ENCODE measurements at regions of chr6 and their contacts with region 1.

Region 1: GRCh38 chr6:14066782-14067406 is 50.7 kb upstream of the CD83 start:
- DNase-seq: no peak
- H3K4me3 ChIP-seq: no peak overlapping the region
- H3K27ac ChIP-seq: no peak overlapping the region
- H3K4me1 ChIP-seq: no peaks in the 10 kb centered on the region
- H3K27me3 ChIP-seq: no peaks in the 10 kb centered on the region
- CTCF ChIP-seq: peak in 2 of 3 experiments; percentile 61 to 69; a peak in 2 of 4 replicates
- EP300 ChIP-seq: no peak
- POLR2A ChIP-seq: no peak
- RAD21 ChIP-seq: peak; percentile 92 to 93

Region 2: DNA sequence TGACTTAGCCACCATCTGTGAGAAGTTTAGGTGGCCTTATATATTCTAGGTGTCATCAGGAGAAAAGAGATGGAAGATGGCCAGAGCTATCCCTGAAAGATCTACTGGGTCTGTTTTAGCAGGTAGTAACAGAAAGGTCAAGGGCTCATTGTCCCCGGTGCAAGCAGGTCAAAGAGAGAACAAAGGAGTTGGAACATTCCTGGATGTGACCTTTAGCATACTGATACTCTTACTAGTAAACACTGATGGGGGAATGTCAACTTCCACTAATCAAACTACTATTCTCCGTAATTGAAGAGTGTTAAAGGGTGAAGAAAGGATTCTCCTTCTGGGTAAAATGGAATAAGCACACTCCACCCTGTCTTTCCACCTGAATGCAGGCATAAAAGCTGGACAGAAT is 248.6 kb before region 1 on chr6:
- CTCF ChIA-PET with region 1: no interaction called
- POLR2A ChIA-PET with region 1: no interaction called
- DNase-seq: no peak
- H3K4me3 ChIP-seq: no peak overlapping the region
- H3K27ac ChIP-seq: no peak overlapping the region
- H3K4me1 ChIP-seq: peaks cover 0 to 2% (median 0%) of the 10 kb centered on the region in 4 experiments; a peak in 1 of 7 replicates
- H3K27me3 ChIP-seq: no peaks in the 10 kb centered on the region
- CTCF ChIP-seq: no peak
- EP300 ChIP-seq: no peak
- POLR2A ChIP-seq: no peak
- RAD21 ChIP-seq: no peak

Region 3: GRCh38 chr6:13873285-13874190 is 193.4 kb before region 1 on chr6:
- CTCF ChIA-PET with region 1: interaction called, 35 read pairs
- POLR2A ChIA-PET with region 1: no interaction called
- DNase-seq: peak; percentile 76 to 95
- H3K4me3 ChIP-seq: peak overlapping the region; percentile 13 to 52 (median 31); a peak in 7 of 8 replicates
- H3K27ac ChIP-seq: no peak overlapping the region
- H3K4me1 ChIP-seq: peaks cover 2 to 7% (median 5%) of the 10 kb centered on the region in 4 experiments; a peak in 5 of 7 replicates
- H3K27me3 ChIP-seq: peaks cover 0 to 20% (median 9%) of the 10 kb centered on the region in 4 experiments; a peak in 6 of 7 replicates
- CTCF ChIP-seq: peak; percentile 87 to 97 (median 88)
- EP300 ChIP-seq: no peak
- POLR2A ChIP-seq: peak in 1 of 2 experiments; percentile 24; a peak in 1 of 3 replicates
- RAD21 ChIP-seq: peak; percentile 66 to 77

Region 4: GRCh38 chr6:13903364-13903763 is 163.5 kb before region 1 on chr6:
- CTCF ChIA-PET with region 1: interaction called, 193 read pairs
- POLR2A ChIA-PET with region 1: interaction called, 3 read pairs
- DNase-seq: no peak
- H3K4me3 ChIP-seq: no peak overlapping the region
- H3K27ac ChIP-seq: no peak overlapping the region
- H3K4me1 ChIP-seq: no peaks in the 10 kb centered on the region
- H3K27me3 ChIP-seq: no peaks in the 10 kb centered on the region
- CTCF ChIP-seq: no peak
- EP300 ChIP-seq: no peak
- POLR2A ChIP-seq: no peak
- RAD21 ChIP-seq: no peak

Region 5: GRCh38 chr6:13924146-13924948 is 142.5 kb before region 1 on chr6:
- CTCF ChIA-PET with region 1: interaction called, 13 read pairs
- POLR2A ChIA-PET with region 1: interaction called, 6 read pairs
- DNase-seq: peak in 1 of 2 experiments; percentile 87
- H3K4me3 ChIP-seq: peak overlapping the region; percentile 57 to 90 (median 76)
- H3K27ac ChIP-seq: 0 out of 2 replicates have a peak overlapping the region, but pooled peaks have one; percentile 6
- H3K4me1 ChIP-seq: peaks cover 0 to 4% (median 3%) of the 10 kb centered on the region in 4 experiments; a peak in 3 of 7 replicates
- H3K27me3 ChIP-seq: no peaks in the 10 kb centered on the region; a peak in 3 of 7 replicates
- CTCF ChIP-seq: no peak
- EP300 ChIP-seq: no peak
- POLR2A ChIP-seq: peak in 1 of 2 experiments; percentile 14; a peak in 1 of 3 replicates
- RAD21 ChIP-seq: no peak

Region 6: GRCh38 chr6:14046476-14047068 is 20.3 kb before region 1 on chr6:
- CTCF ChIA-PET with region 1: interaction called, 99 read pairs
- POLR2A ChIA-PET with region 1: interaction called, 3 read pairs
- DNase-seq: peak; percentile 23 to 66
- H3K4me3 ChIP-seq: no peak overlapping the region
- H3K27ac ChIP-seq: no peak overlapping the region
- H3K4me1 ChIP-seq: no peaks in the 10 kb centered on the region
- H3K27me3 ChIP-seq: no peaks in the 10 kb centered on the region; a peak in 1 of 7 replicates
- CTCF ChIP-seq: peak; percentile 71 to 80 (median 79)
- EP300 ChIP-seq: no peak
- POLR2A ChIP-seq: no peak
- RAD21 ChIP-seq: peak; percentile 70 to 77

Region 7: DNA sequence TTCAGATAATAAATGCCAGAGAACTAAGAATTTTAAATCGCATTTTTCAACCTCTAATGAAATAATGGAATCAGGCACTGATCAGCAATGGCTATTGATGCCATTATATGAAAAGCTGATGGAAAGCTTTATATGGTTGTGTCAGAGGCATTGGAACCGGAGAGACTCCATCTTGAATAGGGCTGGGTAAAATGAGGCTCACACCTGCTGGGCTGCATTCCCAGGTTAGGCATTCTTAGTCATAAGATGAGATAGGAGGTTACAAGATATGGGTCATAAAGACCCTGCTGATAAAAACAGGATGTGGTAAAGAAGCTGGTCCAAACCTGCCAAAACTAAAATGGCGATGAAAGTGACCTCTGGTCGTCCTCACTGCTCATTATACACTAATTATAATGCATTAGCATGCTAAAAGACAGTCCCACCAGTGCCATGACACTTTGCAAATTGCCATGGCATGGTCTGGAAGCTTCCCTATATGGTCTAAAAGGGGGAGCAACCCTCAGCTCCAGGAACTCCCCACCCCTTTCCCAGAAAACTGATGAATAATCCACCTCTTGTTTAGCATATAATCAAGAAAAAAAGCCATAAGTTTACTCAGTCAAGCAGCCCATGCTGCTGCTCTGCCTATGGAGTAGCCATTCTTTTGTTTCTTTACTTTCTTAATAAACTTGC is 10.4 kb after region 1 on chr6:
- CTCF ChIA-PET with region 1: interaction called, 11 read pairs
- POLR2A ChIA-PET with region 1: interaction called, 3 read pairs
- DNase-seq: no peak
- H3K4me3 ChIP-seq: no peak overlapping the region
- H3K27ac ChIP-seq: no peak overlapping the region
- H3K4me1 ChIP-seq: peaks cover 0 to 2% (median 2%) of the 10 kb centered on the region in 4 experiments; a peak in 3 of 7 replicates
- H3K27me3 ChIP-seq: no peaks in the 10 kb centered on the region
- CTCF ChIP-seq: no peak
- EP300 ChIP-seq: no peak
- POLR2A ChIP-seq: no peak
- RAD21 ChIP-seq: no peak

Region 8: GRCh38 chr6:14134211-14134910 is 67.5 kb after region 1 on chr6:
- CTCF ChIA-PET with region 1: no interaction called
- POLR2A ChIA-PET with region 1: no interaction called
- DNase-seq: no peak
- H3K4me3 ChIP-seq: no peak overlapping the region
- H3K27ac ChIP-seq: no peak overlapping the region
- H3K4me1 ChIP-seq: peaks cover 0 to 4% (median 2%) of the 10 kb centered on the region in 4 experiments; a peak in 3 of 7 replicates
- H3K27me3 ChIP-seq: no peaks in the 10 kb centered on the region; a peak in 1 of 7 replicates
- CTCF ChIP-seq: no peak
- EP300 ChIP-seq: no peak
- POLR2A ChIP-seq: no peak
- RAD21 ChIP-seq: no peak

Measured in H1 (cell line).